GM18951 (cell line): ENCODE measurements at regions of chrX and their contacts with region 1.

Region 1: GRCh38 chrX:119516157-119516702 is 48.0 kb downstream of the SLC25A5 start:
- POLR2A ChIP-seq: no peak

Region 2: DNA sequence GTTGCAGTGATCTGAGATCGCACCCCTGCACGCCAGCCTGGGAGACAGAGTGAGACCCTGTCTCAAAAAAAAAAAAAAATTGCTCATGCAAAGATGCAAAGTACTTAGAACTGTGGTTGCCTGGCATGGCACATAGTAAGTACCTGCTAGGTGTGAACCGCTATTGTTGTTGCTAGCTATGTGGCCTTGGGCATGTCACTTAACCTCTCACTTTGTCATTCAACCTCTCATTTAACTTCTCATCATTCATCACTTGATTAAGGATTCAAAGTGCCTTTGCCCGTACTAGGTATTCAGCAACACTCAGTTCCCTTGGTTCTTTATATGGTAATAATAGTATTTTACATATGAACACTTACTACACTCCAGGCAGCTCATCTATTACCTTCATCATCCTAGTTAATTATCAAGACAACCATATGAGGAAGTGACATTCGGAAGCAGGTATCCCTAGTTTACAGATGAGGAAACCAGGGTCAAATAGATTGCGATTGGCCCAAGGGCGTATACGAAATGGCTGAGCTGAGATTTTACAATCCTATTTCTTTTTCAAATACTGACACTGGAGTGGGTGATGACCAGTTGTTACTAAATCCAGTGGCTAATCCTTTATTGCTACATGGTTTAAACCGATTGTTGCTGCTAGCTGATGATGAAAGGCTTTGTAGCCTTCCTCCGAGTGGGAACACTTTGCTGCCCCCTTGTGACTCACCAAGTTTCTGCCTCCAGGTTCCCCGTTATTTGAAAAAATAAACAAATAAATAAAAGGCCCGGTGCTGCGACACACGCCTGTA is 213.4 kb after region 1 on chrX:
- in situ Hi-C with region 1: loop called (anchors 25 kb)
- POLR2A ChIP-seq: no peak